ENCODE measurements at regions of chr15 and their contacts with region 1.

Region 1: GRCh38 chr15:39782441-39783138 is at the start of gene FSIP1:
- DNase-seq: peak; percentile 98
- H3K4me3 ChIP-seq: peak within 1 kb of the TSS; percentile 68 to 84 (median 79)
- H3K27ac ChIP-seq: peak within 1 kb of the TSS; percentile 77 to 93 (median 88)
- H3K4me1 ChIP-seq: peaks cover 4 to 22% (median 11%) of the 10 kb centered on the region in 4 donors
- H3K27me3 ChIP-seq: no peaks in the 10 kb centered on the region
- CTCF ChIP-seq: no peak
- EP300 ChIP-seq: no peak
- POLR2A ChIP-seq: peak; percentile 70
- total RNA-seq, gene FSIP1: 1.9 to 8.6 (median 5.6) TPM in 3 of 4 donors, not detected in the other

Region 2: GRCh38 chr15:39874890-39875549 is 92.4 kb after region 1 on chr15:
- in situ Hi-C with region 1: loop called in 1 of 4 experiments (anchors 10 kb)
- intact Hi-C with region 1: no loop called
- DNase-seq: peak; percentile 35
- H3K4me3 ChIP-seq: no peak overlapping the region
- H3K27ac ChIP-seq: no peak overlapping the region
- H3K4me1 ChIP-seq: peaks cover 0 to 2% (median 0%) of the 10 kb centered on the region in 4 donors
- H3K27me3 ChIP-seq: no peaks in the 10 kb centered on the region
- CTCF ChIP-seq: peak; percentile 47 to 68 (median 63)
- EP300 ChIP-seq: no peak
- POLR2A ChIP-seq: no peak